AG04450 (cell line): ENCODE measurements at regions of chr4 and their contacts with region 1.

Region 1: DNA sequence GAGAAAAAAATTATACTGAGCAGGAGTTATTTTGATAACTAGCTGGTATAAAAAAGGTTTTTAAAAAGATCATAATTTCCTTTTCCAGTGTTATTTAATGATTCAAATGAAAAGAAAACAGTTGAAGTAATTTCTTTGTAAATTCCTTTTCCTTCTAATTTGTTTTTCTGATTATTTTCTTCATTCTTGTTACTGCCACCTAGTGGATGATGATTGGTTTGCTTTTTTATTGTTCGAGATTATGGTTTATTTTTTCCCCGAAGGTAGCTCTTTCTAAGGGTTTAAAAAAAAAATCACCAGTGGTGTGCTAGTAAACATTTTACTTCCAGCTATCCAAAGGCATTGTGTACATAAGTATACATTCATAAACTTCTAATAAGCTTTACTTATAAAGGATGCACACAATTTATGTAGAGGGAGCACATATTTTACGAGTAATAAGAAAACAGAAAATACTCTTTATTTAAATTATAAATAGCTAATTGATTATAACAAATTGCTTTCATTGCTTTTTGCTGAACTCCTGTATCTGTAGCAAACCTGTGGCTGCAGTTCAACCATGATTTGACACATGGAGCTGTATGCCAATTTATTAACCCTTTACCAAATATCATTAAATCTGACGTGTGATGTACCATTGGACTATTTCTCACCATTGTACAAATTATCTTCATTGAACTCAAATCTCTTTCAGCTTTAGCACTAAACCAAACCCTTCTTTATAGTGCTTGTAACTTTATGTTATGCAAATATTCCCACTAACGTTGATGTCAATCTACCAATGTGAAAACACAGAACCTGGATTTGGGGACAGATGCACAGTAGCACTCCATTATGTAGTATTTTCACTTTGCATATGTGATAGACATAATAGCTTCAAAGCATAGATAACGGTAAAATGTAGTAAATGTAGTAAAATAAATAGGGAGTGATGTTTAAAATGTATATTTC is 97.8 kb upstream of the ANK2 start:
- DNase-seq: no peak
- H3K4me3 ChIP-seq: no peak overlapping the region
- H3K27ac ChIP-seq: no peak overlapping the region
- H3K27me3 ChIP-seq: no peaks in the 10 kb centered on the region
- CTCF ChIP-seq: peak; percentile 58

Region 2: GRCh38 chr4:112968451-112969159 is 17.0 kb after region 1 on chr4:
- CTCF ChIA-PET with region 1: interaction called, 11 read pairs
- POLR2A ChIA-PET with region 1: no interaction called
- DNase-seq: no peak
- H3K4me3 ChIP-seq: no peak overlapping the region
- H3K27ac ChIP-seq: no peak overlapping the region
- H3K27me3 ChIP-seq: no peaks in the 10 kb centered on the region
- CTCF ChIP-seq: no peak